B cell (primary cell): ENCODE measurements at regions of chr2 and their contacts with region 1.

Region 1: DNA sequence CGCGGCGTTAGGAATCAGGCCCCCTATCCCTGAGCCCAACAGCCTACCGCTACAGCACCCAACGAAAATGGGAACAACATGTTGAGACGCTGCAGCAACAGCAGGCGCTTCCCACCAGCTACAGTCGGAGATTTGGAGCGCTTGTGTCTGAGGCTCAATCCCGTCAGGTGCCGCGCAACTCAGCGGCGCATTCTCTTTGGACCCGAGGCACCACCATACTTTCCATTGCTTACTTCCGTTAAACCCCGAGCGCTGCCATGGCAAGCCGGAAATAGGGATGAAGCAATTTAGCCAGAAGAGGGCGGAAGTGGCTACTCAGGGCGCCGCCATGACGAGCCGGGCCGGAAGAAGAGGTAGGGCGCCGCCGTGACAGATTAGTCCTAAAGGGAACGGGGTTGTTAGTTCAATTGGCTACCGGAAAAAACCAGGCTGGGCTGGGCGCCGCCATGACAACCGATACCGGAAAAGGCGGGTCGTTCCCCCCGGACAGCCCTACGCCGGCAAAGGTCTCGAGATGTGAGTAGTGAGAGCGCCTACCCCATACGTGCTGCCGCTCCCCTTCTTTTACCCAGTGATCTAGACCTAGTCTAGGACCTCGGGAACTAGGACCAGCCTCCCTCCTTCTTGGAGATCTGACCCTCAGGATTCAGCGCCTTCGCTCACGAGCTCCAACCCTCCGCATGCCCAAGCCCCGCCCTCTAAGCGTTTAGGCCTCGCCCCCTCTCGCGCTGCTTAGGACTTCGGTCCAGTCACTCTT is at the start of gene CHCHD5:
- DNase-seq: peak; percentile 96
- ATAC-seq: peak; percentile 83
- H3K4me3 ChIP-seq: peak within 1 kb of the TSS; percentile 70 to 94 (median 75)
- H3K4me3 Mint-ChIP-seq: peak within 1 kb of the TSS; percentile 97
- H3K27ac ChIP-seq: peak within 1 kb of the TSS; percentile 83 to 87
- H3K27ac Mint-ChIP-seq: peak within 1 kb of the TSS; percentile 98
- H3K4me1 ChIP-seq: peaks cover 13 to 25% of the 10 kb centered on the region in 2 donors
- H3K4me1 Mint-ChIP-seq: peaks cover 33% of the 10 kb centered on the region
- H3K27me3 ChIP-seq: no peaks in the 10 kb centered on the region
- H3K27me3 Mint-ChIP-seq: no peaks in the 10 kb centered on the region
- CTCF ChIP-seq: no peak
- total RNA-seq, gene CHCHD5: 19.9 and 22.4 TPM in 2 replicates

Region 2: DNA sequence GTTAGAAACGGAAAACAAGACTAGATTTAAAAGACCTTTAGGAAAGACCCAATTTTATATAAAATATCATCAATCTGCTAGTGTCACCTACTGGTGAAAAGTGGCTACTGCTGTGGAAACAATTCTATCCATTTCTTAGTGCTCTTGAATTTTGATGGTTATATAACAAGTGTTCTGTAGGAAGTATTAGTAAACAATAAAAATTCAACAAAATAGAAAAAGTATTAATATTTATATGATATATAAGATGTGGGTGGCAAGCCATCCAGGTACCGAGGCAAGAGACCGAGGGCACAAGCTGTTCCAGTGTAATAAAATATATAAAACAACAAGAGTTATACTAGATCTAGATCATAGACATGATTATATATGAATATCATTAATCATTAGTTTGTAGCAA is 535.4 kb before region 1 on chr2:
- CTCF ChIA-PET with region 1: no interaction called
- POLR2A ChIA-PET with region 1: no interaction called
- intact Hi-C with region 1: loop called (anchors 2 kb)
- DNase-seq: peak; percentile 68
- ATAC-seq: peak; percentile 82
- H3K4me3 ChIP-seq: no peak overlapping the region
- H3K4me3 Mint-ChIP-seq: no peak overlapping the region
- H3K27ac ChIP-seq: no peak overlapping the region
- H3K27ac Mint-ChIP-seq: no peak overlapping the region
- H3K4me1 ChIP-seq: peaks cover 6 to 7% of the 10 kb centered on the region in 2 donors
- H3K4me1 Mint-ChIP-seq: peaks cover 5% of the 10 kb centered on the region
- H3K27me3 ChIP-seq: peaks cover 0 to 3% (median 0%) of the 10 kb centered on the region in 4 experiments
- H3K27me3 Mint-ChIP-seq: peaks cover 9% of the 10 kb centered on the region
- CTCF ChIP-seq: peak; percentile 89

Region 3: GRCh38 chr2:112254466-112255239 is 329.7 kb before region 1 on chr2 and contains the start of gene ZC3H8:
- CTCF ChIA-PET with region 1: interaction called, 3 read pairs
- POLR2A ChIA-PET with region 1: interaction called, 3 read pairs
- intact Hi-C with region 1: loop called (anchors 5 kb)
- DNase-seq: peak; percentile 95
- ATAC-seq: peak; percentile 89
- H3K4me3 ChIP-seq: peak within 1 kb of the TSS; percentile 72 to 84 (median 79)
- H3K4me3 Mint-ChIP-seq: peak within 1 kb of the TSS; percentile 93
- H3K27ac ChIP-seq: peak within 1 kb of the TSS; percentile 83 to 93
- H3K27ac Mint-ChIP-seq: peak within 1 kb of the TSS; percentile 92
- H3K4me1 ChIP-seq: peaks cover 9 to 17% of the 10 kb centered on the region in 2 donors
- H3K4me1 Mint-ChIP-seq: peaks cover 23% of the 10 kb centered on the region
- H3K27me3 ChIP-seq: no peaks in the 10 kb centered on the region
- H3K27me3 Mint-ChIP-seq: no peaks in the 10 kb centered on the region
- CTCF ChIP-seq: no peak
- total RNA-seq, gene ZC3H8: 26.0 and 27.2 TPM in 2 replicates

Region 4: GRCh38 chr2:112481050-112481527 is 103.2 kb before region 1 on chr2:
- CTCF ChIA-PET with region 1: interaction called, 11 read pairs
- POLR2A ChIA-PET with region 1: interaction called, 6 read pairs
- intact Hi-C with region 1: loop called (anchors 1 kb)
- DNase-seq: peak; percentile 87
- ATAC-seq: peak; percentile 67
- H3K4me3 ChIP-seq: peak overlapping the region; percentile 84 to 96 (median 88)
- H3K4me3 Mint-ChIP-seq: peak overlapping the region; percentile 93
- H3K27ac ChIP-seq: peak overlapping the region; percentile 79 to 86
- H3K27ac Mint-ChIP-seq: peak overlapping the region; percentile 97
- H3K4me1 ChIP-seq: peaks cover 16 to 23% of the 10 kb centered on the region in 2 donors
- H3K4me1 Mint-ChIP-seq: peaks cover 18% of the 10 kb centered on the region
- H3K27me3 ChIP-seq: no peaks in the 10 kb centered on the region
- H3K27me3 Mint-ChIP-seq: no peaks in the 10 kb centered on the region
- CTCF ChIP-seq: peak; percentile 91

Region 5: GRCh38 chr2:112601751-112602150 is 17.4 kb after region 1 on chr2:
- CTCF ChIA-PET with region 1: interaction called, 11 read pairs
- POLR2A ChIA-PET with region 1: no interaction called
- intact Hi-C with region 1: no loop called
- DNase-seq: no peak
- ATAC-seq: no peak
- H3K4me3 ChIP-seq: no peak overlapping the region
- H3K4me3 Mint-ChIP-seq: no peak overlapping the region
- H3K27ac ChIP-seq: no peak overlapping the region
- H3K27ac Mint-ChIP-seq: no peak overlapping the region
- H3K4me1 ChIP-seq: peaks cover 0 to 5% of the 10 kb centered on the region in 2 donors
- H3K4me1 Mint-ChIP-seq: peaks cover 5% of the 10 kb centered on the region
- H3K27me3 ChIP-seq: no peaks in the 10 kb centered on the region
- H3K27me3 Mint-ChIP-seq: no peaks in the 10 kb centered on the region
- CTCF ChIP-seq: no peak

Region 6: GRCh38 chr2:112714836-112715631 is 130.7 kb after region 1 on chr2:
- CTCF ChIA-PET with region 1: no interaction called
- POLR2A ChIA-PET with region 1: interaction called, 12 read pairs
- intact Hi-C with region 1: no loop called
- DNase-seq: no peak
- ATAC-seq: no peak
- H3K4me3 ChIP-seq: no peak overlapping the region
- H3K4me3 Mint-ChIP-seq: no peak overlapping the region
- H3K27ac ChIP-seq: no peak overlapping the region
- H3K27ac Mint-ChIP-seq: no peak overlapping the region
- H3K4me1 ChIP-seq: peaks cover 3 to 26% of the 10 kb centered on the region in 2 donors
- H3K4me1 Mint-ChIP-seq: peaks cover 27% of the 10 kb centered on the region
- H3K27me3 ChIP-seq: peaks cover 0 to 2% (median 0%) of the 10 kb centered on the region in 4 experiments
- H3K27me3 Mint-ChIP-seq: no peaks in the 10 kb centered on the region
- CTCF ChIP-seq: no peak

Region 7: DNA sequence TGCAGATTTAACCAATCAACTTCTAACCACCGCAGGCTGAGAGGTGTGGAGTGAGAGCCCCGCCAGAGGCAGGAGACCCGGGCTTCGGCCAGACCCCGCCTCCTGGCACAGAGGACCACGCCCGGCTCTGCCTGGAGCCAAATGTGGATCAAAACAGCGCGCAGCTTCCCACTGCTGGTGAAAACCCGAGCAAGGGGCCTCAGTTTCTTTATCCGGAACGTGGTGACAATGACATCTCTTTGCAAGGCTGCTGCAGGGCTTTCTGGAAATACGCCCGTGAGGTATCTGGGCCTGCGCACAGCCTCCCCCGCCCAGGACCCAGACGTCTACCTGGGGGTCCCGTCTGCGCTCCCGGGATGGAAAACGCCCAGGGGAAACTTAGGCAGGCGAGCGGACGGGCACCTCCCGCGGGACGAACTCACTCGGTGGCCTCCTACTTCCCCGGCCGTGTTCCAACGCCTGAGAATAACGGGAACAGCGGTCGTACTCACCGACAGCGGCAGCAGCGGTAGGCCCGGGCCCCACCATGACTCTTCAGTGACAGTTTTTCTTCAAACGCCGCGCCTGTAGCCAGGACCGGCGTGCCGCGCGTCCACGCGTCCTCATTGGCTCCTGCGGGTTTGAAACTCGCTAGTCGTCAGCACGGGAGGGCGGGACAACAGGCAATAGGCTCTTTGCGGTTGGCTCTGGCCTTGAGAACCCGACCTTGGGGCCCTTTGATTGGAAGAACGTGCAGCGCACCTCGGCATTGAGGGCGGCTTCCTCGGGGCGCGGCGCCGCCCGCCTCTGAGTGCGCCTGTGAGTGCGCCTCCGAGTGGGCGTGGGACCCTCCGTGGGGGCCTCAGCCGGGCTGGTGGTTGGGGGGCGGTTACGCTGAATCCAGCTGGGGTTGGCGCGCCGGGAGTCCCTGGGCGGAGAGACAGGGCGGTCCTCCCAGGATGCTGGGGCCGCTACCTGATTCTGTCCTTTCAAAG is 180.0 kb after region 1 on chr2 and contains the start of gene CKAP2L:
- CTCF ChIA-PET with region 1: no interaction called
- POLR2A ChIA-PET with region 1: no interaction called
- intact Hi-C with region 1: loop called (anchors 1 kb)
- DNase-seq: peak; percentile 95
- ATAC-seq: peak; percentile 99
- H3K4me3 ChIP-seq: peak within 1 kb of the TSS; percentile 42 to 96 (median 71)
- H3K4me3 Mint-ChIP-seq: peak within 1 kb of the TSS; percentile 97
- H3K27ac ChIP-seq: peak within 1 kb of the TSS in 1 of 2 donors; percentile 58
- H3K27ac Mint-ChIP-seq: peak within 1 kb of the TSS; percentile 77
- H3K4me1 ChIP-seq: peaks cover 8 to 12% of the 10 kb centered on the region in 2 donors
- H3K4me1 Mint-ChIP-seq: peaks cover 32% of the 10 kb centered on the region
- H3K27me3 ChIP-seq: no peaks in the 10 kb centered on the region
- H3K27me3 Mint-ChIP-seq: no peaks in the 10 kb centered on the region
- CTCF ChIP-seq: no peak
- total RNA-seq, gene CKAP2L: 0.25 TPM in 1 of 2 replicates, not detected in the other